Breast epithelium (tissue), 4 donors: ENCODE measurements at regions of chr12 and their contacts with region 1.

Region 1: GRCh38 chr12:132651444-132652100 is 33.0 kb downstream of the P2RX2 start:
- DNase-seq: no peak
- H3K4me3 ChIP-seq: no peak overlapping the region
- H3K27ac ChIP-seq: no peak overlapping the region
- H3K4me1 ChIP-seq: no peaks in the 10 kb centered on the region
- H3K27me3 ChIP-seq: no peaks in the 10 kb centered on the region
- CTCF ChIP-seq: no peak
- POLR2A ChIP-seq: no peak

Region 2: GRCh38 chr12:130658145-130658911 is 1993.2 kb before region 1 on chr12:
- intact Hi-C with region 1: loop called (anchors 5 kb)
- DNase-seq: no peak
- H3K4me3 ChIP-seq: no peak overlapping the region
- H3K27ac ChIP-seq: no peak overlapping the region
- H3K4me1 ChIP-seq: no peaks in the 10 kb centered on the region
- H3K27me3 ChIP-seq: no peaks in the 10 kb centered on the region
- CTCF ChIP-seq: no peak
- POLR2A ChIP-seq: no peak

Region 3: DNA sequence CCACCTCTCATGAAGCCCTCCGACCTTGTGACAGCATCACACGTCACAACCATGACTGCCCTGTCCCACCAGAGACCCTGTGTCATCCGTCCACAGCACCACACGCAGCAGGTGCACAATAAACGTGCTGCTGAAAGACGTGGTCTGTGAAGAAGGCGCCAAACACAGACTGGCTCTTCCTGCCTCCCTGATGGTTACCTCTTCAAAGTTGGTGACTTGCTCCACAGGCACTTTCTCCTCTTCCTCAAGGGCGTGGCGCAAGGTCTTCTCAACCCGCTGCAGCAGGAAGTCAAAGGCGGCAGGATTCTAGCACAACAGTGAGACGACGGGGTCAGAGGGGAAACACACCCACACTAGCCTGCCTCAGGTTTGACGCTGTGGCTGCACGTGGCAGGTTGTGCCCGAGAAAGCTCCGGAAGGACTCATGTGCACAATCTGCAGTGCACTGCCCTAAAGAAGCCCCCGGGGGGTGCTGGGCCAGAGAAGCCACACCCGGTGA is 20.5 kb after region 1 on chr12:
- intact Hi-C with region 1: no loop called
- DNase-seq: no peak
- H3K4me3 ChIP-seq: no peak overlapping the region
- H3K27ac ChIP-seq: no peak overlapping the region
- H3K4me1 ChIP-seq: no peaks in the 10 kb centered on the region
- H3K27me3 ChIP-seq: no peaks in the 10 kb centered on the region
- CTCF ChIP-seq: no peak
- POLR2A ChIP-seq: no peak